ENCODE measurements at regions of chr14 and their contacts with region 1.

Region 1: GRCh38 chr14:99884834-99885648 is 91.8 kb downstream of the EML1 start:
- DNase-seq: peak; percentile 23
- H3K4me3 Mint-ChIP-seq: no peak overlapping the region
- H3K27ac Mint-ChIP-seq: no peak overlapping the region
- H3K4me1 Mint-ChIP-seq: no peaks in the 10 kb centered on the region
- H3K27me3 Mint-ChIP-seq: peaks cover 7% of the 10 kb centered on the region

Region 2: DNA sequence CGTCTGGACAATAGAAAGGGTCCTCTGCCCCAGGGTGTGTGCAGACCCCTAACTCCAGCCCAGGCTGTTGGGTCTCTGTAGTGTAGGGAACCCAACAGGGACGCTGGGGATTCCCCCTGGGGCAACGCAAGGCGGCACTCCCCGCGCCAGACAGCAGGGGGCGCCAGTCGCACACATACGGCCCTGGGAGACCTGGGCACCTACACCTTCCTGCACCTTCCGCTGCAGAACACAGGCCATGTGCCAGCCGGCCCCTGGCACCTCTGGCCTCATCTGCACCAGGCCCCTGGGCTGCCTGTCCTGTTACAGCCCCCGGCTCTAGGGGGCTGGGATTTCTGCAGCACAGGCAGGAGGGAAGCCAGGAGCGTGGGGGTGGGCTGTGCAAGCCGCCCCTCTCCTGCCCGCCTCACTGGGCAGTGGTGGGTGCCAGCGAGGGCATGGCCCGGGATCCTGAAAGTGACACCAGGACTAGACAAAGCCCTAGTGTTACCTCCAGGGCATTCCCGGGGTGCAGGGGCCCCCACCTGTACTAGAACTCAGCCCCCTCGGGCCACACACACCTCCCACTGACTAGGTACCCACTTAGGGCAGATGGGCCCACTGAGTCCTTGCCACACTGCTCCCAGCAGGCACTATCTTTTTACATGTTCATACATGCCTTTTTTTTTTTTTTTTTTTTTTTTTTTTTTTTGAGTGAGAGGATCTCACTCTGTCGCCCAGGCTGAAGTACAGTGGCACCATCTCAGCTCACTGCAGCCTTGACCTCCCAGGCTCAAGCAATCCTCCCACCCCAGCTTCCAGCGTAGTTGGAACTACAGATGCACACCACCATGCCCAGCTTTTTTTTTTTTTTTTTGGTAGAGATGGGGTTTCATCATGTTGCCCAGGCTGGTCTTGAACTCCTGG is 366.3 kb before region 1 on chr14:
- CTCF ChIA-PET with region 1: no interaction called
- intact Hi-C with region 1: loop called (anchors 2 kb)
- DNase-seq: peak; percentile 89
- H3K4me3 Mint-ChIP-seq: no peak overlapping the region
- H3K27ac Mint-ChIP-seq: no peak overlapping the region
- H3K4me1 Mint-ChIP-seq: no peaks in the 10 kb centered on the region
- H3K27me3 Mint-ChIP-seq: no peaks in the 10 kb centered on the region

Region 3: DNA sequence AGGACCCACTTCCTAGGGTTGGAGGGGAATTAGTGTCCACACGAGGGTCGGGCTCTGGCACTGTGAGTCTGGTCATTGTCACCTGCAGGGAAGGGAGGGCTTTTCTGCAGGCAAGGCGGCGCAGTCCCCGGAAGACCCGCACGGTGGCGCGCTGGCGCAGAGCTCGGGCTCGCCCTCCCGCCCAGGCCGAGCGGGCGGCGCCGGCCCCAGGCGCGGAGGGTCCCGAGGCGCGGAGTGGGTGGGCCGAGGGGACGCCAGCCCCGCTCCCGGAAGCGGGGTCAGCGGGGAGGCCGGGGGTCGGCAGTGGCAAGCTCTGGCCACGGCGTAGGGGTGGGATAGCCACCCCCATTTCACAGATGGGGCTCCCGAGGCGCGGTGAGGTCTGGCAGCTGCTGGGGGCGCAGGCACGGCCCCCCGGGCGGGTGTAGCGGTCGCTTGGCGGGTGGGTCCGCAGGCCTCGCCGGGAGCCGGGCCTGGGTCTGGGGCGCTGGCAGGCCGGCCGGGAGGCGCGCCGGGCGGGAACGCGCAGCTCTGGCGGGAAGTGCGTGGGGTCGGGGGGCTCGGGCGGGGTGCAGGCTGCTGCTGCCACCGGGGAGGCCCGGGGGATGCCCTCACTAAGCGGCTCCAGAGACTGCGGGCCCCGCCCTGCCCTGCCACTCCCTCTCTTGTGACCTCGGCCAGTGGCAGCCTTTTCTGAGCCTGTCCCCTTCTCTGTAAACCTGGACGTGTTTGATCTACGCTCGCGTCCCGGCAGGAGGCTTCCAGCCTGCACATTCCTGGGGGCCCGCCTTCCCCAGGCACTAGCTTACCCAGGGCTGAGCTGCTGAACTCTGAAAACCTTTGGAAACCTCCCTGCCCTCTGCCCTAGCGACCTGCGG is 154.8 kb before region 1 on chr14:
- CTCF ChIA-PET with region 1: interaction called, 39 read pairs
- intact Hi-C with region 1: loop called (anchors 1 kb)
- DNase-seq: peak; percentile 78
- H3K4me3 Mint-ChIP-seq: peak overlapping the region; percentile 42
- H3K27ac Mint-ChIP-seq: no peak overlapping the region
- H3K4me1 Mint-ChIP-seq: peaks cover 2% of the 10 kb centered on the region
- H3K27me3 Mint-ChIP-seq: peaks cover 30% of the 10 kb centered on the region

Region 4: GRCh38 chr14:99749142-99749541 is 135.9 kb before region 1 on chr14:
- CTCF ChIA-PET with region 1: no interaction called
- intact Hi-C with region 1: loop called (anchors 5 kb)
- DNase-seq: no peak
- H3K4me3 Mint-ChIP-seq: no peak overlapping the region
- H3K27ac Mint-ChIP-seq: no peak overlapping the region
- H3K4me1 Mint-ChIP-seq: peaks cover 25% of the 10 kb centered on the region
- H3K27me3 Mint-ChIP-seq: peaks cover 19% of the 10 kb centered on the region

Region 5: GRCh38 chr14:99853206-99853605 is 31.8 kb before region 1 on chr14:
- CTCF ChIA-PET with region 1: no interaction called
- intact Hi-C with region 1: no loop called
- DNase-seq: no peak
- H3K4me3 Mint-ChIP-seq: no peak overlapping the region
- H3K27ac Mint-ChIP-seq: no peak overlapping the region
- H3K4me1 Mint-ChIP-seq: no peaks in the 10 kb centered on the region
- H3K27me3 Mint-ChIP-seq: peaks cover 12% of the 10 kb centered on the region

Region 6: GRCh38 chr14:99899578-99900178 is 14.6 kb after region 1 on chr14:
- CTCF ChIA-PET with region 1: interaction called, 16 read pairs
- intact Hi-C with region 1: no loop called
- DNase-seq: no peak
- H3K4me3 Mint-ChIP-seq: no peak overlapping the region
- H3K27ac Mint-ChIP-seq: no peak overlapping the region
- H3K4me1 Mint-ChIP-seq: no peaks in the 10 kb centered on the region
- H3K27me3 Mint-ChIP-seq: peaks cover 5% of the 10 kb centered on the region